ENCODE measurements at regions of chr19 and their contacts with region 1.

Region 1: GRCh38 chr19:5904352-5905113 is at the start of gene VMAC:
- DNase-seq: peak; percentile 100
- H3K4me3 ChIP-seq: peak within 1 kb of the TSS; percentile 84 to 100 (median 97)
- H3K27ac ChIP-seq: peak within 1 kb of the TSS; percentile 94 to 97
- H3K4me1 ChIP-seq: peaks cover 0 to 25% (median 16%) of the 10 kb centered on the region in 4 experiments
- H3K27me3 ChIP-seq: no peaks in the 10 kb centered on the region

Region 2: DNA sequence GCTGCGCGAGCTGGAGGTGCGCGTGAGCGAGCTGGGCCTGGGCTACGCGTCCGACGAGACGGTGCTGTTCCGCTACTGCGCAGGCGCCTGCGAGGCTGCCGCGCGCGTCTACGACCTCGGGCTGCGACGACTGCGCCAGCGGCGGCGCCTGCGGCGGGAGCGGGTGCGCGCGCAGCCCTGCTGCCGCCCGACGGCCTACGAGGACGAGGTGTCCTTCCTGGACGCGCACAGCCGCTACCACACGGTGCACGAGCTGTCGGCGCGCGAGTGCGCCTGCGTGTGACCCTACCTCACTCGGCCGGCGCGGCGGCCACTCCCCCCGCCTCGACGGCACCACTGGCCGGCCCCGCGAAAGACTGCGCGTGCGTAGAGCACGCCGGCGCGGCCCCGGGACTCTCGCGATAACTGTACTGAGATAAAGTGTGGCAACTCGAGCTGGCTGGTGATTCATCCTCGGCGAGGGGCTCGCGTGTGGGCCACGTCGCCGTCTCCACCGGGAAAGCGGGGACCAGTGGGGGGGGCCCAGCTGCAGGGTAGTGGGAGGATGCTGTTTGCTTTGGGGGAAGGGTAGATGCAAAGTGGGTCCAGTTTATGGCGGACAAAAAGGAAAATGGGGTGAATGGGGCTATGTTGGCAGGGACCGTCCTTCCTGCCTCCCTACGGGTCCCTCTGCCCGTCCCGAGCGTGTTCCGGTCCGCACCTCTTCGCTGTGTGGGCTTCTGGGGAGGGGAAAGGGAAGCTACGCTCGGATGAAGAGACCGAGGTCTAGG is 76.5 kb before region 1 on chr19:
- CTCF ChIA-PET with region 1: no interaction called
- POLR2A ChIA-PET with region 1: interaction called, 10 read pairs
- DNase-seq: peak; percentile 93 to 96 (median 96)
- H3K4me3 ChIP-seq: peak overlapping the region; percentile 46 to 93 (median 74)
- H3K27ac ChIP-seq: peak overlapping the region; percentile 33 to 85
- H3K4me1 ChIP-seq: peaks cover 0 to 31% (median 29%) of the 10 kb centered on the region in 4 experiments
- H3K27me3 ChIP-seq: no peaks in the 10 kb centered on the region